ENCODE measurements at regions of chr3 and their contacts with region 1.

Region 1: GRCh38 chr3:61858056-61858455 is 296.7 kb downstream of the PTPRG start:
- DNase-seq: no peak
- ATAC-seq: no peak
- H3K4me3 ChIP-seq: no peak overlapping the region
- H3K4me3 Mint-ChIP-seq: no peak overlapping the region
- H3K27ac ChIP-seq: no peak overlapping the region
- H3K27ac Mint-ChIP-seq: no peak overlapping the region
- H3K4me1 ChIP-seq: no peaks in the 10 kb centered on the region
- H3K4me1 Mint-ChIP-seq: no peaks in the 10 kb centered on the region
- H3K27me3 ChIP-seq: no peaks in the 10 kb centered on the region
- H3K27me3 Mint-ChIP-seq: no peaks in the 10 kb centered on the region
- CTCF ChIP-seq: no peak

Region 2: GRCh38 chr3:61637088-61638051 is 220.7 kb before region 1 on chr3:
- CTCF ChIA-PET with region 1: no interaction called
- POLR2A ChIA-PET with region 1: no interaction called
- intact Hi-C with region 1: no loop called
- DNase-seq: no peak
- ATAC-seq: no peak
- H3K4me3 ChIP-seq: no peak overlapping the region
- H3K4me3 Mint-ChIP-seq: no peak overlapping the region
- H3K27ac ChIP-seq: no peak overlapping the region
- H3K27ac Mint-ChIP-seq: no peak overlapping the region
- H3K4me1 ChIP-seq: no peaks in the 10 kb centered on the region
- H3K4me1 Mint-ChIP-seq: no peaks in the 10 kb centered on the region
- H3K27me3 ChIP-seq: no peaks in the 10 kb centered on the region
- H3K27me3 Mint-ChIP-seq: no peaks in the 10 kb centered on the region
- CTCF ChIP-seq: no peak

Region 3: GRCh38 chr3:61936344-61936937 is 78.4 kb after region 1 on chr3:
- CTCF ChIA-PET with region 1: no interaction called
- POLR2A ChIA-PET with region 1: no interaction called
- intact Hi-C with region 1: loop called in 1 of 2 experiments (anchors 1 kb)
- DNase-seq: peak in 3 of 9 experiments; percentile 13 to 21 (median 15)
- ATAC-seq: no peak
- H3K4me3 ChIP-seq: no peak overlapping the region
- H3K4me3 Mint-ChIP-seq: no peak overlapping the region
- H3K27ac ChIP-seq: no peak overlapping the region
- H3K27ac Mint-ChIP-seq: no peak overlapping the region
- H3K4me1 ChIP-seq: no peaks in the 10 kb centered on the region
- H3K4me1 Mint-ChIP-seq: no peaks in the 10 kb centered on the region
- H3K27me3 ChIP-seq: no peaks in the 10 kb centered on the region
- H3K27me3 Mint-ChIP-seq: no peaks in the 10 kb centered on the region
- CTCF ChIP-seq: no peak

Region 4: DNA sequence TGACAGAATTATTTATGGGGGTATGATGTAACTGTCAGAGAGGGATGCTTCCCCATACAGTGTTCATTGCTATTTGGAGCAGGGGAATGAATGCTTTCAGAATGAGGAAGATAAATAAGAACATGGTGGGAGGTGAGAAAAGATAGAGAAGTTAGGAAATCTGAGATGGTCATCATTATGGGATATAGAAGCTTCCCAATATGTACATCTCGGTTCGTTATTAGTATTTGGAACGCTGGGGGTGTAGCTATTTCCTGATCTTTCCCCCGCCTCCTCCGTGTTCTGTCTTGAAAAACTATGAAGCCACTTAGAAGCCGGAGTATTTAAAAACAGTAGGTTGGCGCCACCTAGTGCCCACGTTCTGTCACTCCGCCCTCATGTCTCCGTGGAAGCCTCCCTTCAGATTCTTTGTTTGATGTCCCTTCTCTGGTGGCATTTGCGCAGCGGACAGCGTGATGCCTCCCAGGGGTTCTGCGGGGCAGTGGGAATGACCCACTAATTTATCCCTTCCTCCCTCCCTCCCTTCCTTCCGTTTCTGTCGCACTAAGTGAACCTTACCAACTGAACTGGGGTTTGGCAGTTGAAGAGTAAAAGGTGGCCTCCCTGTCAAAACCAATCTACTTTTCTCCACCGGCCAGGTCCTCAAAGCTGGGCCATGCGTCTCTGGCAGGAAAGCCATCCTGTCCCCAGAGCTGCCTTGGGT is 330.8 kb after region 1 on chr3:
- CTCF ChIA-PET with region 1: interaction called, 3 read pairs
- POLR2A ChIA-PET with region 1: no interaction called
- intact Hi-C with region 1: loop called in 1 of 2 experiments (anchors 2 kb)
- DNase-seq: peak; percentile 10 to 72 (median 62)
- ATAC-seq: peak; percentile 51
- H3K4me3 ChIP-seq: no peak overlapping the region
- H3K4me3 Mint-ChIP-seq: no peak overlapping the region
- H3K27ac ChIP-seq: no peak overlapping the region
- H3K27ac Mint-ChIP-seq: no peak overlapping the region
- H3K4me1 ChIP-seq: no peaks in the 10 kb centered on the region
- H3K4me1 Mint-ChIP-seq: peaks cover 7% of the 10 kb centered on the region
- H3K27me3 ChIP-seq: no peaks in the 10 kb centered on the region
- H3K27me3 Mint-ChIP-seq: peaks cover 1% of the 10 kb centered on the region
- CTCF ChIP-seq: peak; percentile 68